Activated CD8-positive, alpha-beta memory T cell treated with anti-CD3 and anti-CD28 coated beads, Interleukin-2, amount 10 ng/mL, durations not matched to agents 7 days and 5 days (primary cell): ENCODE measurements at regions of chr1 and their contacts with region 1.

Region 1: GRCh38 chr1:101238681-101239094 is 1.9 kb downstream of the S1PR1 start:
- DNase-seq: peak; percentile 94
- ATAC-seq: peak; percentile 55
- H3K4me3 Mint-ChIP-seq: peak overlapping the region; percentile 88
- H3K27ac Mint-ChIP-seq: peak overlapping the region; percentile 95
- H3K4me1 Mint-ChIP-seq: peaks cover 59% of the 10 kb centered on the region
- H3K27me3 Mint-ChIP-seq: no peaks in the 10 kb centered on the region

Region 2: GRCh38 chr1:100622037-100622436 is 616.7 kb before region 1 on chr1:
- CTCF ChIA-PET with region 1: no interaction called
- DNase-seq: no peak
- ATAC-seq: no peak
- H3K4me3 Mint-ChIP-seq: no peak overlapping the region
- H3K27ac Mint-ChIP-seq: no peak overlapping the region
- H3K4me1 Mint-ChIP-seq: peaks cover under 1% of the 10 kb centered on the region
- H3K27me3 Mint-ChIP-seq: peaks cover 2% of the 10 kb centered on the region

Region 3: GRCh38 chr1:100921109-100921706 is 317.5 kb before region 1 on chr1:
- CTCF ChIA-PET with region 1: interaction called, 25 read pairs
- DNase-seq: no peak
- ATAC-seq: no peak
- H3K4me3 Mint-ChIP-seq: no peak overlapping the region
- H3K27ac Mint-ChIP-seq: no peak overlapping the region
- H3K4me1 Mint-ChIP-seq: peaks cover 19% of the 10 kb centered on the region
- H3K27me3 Mint-ChIP-seq: no peaks in the 10 kb centered on the region

Region 4: DNA sequence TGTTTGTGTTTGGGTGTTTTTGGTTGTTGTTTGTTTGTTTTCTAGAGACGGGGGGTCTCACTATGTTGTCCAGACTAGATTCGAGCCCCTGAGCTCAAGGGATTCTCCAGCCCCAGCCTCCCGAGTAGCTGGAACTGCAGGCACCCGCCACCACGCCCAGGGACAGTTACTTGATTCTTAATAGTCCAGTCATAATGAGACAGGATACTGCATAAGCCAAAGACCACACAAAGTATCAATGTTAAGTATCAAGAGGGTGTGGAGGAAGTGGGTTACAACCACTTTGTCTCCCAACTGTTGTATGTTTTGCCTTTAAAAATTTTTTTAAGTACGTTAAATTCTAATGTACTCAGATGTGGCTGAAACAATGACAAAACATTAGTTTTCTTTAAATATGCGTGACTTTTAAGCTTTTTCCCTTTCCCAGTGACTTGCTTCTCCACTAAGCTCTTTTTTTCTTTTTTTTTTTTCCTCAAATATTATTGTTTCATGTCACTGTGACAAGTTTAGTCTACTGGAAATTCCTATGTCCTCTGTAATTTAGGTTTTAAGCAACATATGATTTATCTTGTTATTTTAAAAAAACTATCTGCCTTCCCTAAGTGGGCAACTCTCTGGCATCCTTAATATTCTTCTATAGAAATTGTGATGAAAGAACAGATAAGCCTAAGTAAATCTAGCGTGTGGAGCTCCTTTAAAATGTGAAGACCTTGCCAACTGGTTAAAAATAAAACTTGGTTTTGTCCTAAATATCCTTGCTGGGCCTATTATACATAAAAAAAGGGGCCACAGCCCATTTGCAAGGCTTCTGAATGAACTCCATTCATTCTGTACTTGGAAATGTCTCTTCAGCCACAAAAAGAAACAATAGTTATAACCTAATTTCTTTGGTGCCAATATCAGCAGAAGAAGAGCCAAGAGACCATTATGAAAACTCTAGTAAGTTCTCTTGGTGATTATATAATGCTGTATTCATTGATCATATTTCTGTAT is 156.9 kb before region 1 on chr1:
- CTCF ChIA-PET with region 1: interaction called, 10 read pairs
- DNase-seq: peak; percentile 82
- ATAC-seq: peak; percentile 95
- H3K4me3 Mint-ChIP-seq: peak overlapping the region; percentile 13
- H3K27ac Mint-ChIP-seq: peak overlapping the region; percentile 97
- H3K4me1 Mint-ChIP-seq: peaks cover 39% of the 10 kb centered on the region
- H3K27me3 Mint-ChIP-seq: no peaks in the 10 kb centered on the region

Region 5: DNA sequence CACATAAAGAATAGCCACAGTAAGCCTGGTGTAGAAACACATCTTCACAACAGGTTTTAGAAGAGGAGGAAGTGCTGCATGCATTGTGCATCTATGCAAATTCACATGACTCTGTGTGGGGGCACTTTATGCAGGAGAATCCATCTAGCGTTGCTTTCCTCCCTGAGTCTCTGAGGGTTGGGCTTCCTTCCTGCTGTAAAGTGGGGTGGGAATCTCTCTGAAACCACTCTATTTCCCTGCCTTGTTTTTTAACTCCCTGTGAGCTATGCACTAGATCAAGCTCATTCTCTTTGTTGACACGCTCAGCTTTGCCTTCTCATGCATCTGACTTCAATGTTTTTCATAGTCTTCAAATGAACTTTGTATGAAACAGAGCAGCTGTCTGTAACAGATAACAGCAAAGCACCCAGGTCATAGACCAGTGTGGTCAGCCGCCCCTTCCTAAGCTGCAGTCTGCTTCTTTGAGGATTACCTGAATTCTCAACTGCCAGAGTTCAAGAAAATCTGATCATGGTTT is 110.4 kb before region 1 on chr1:
- CTCF ChIA-PET with region 1: interaction called, 17 read pairs
- DNase-seq: no peak
- ATAC-seq: peak; percentile 56
- H3K4me3 Mint-ChIP-seq: peak overlapping the region; percentile 12
- H3K27ac Mint-ChIP-seq: peak overlapping the region; percentile 78
- H3K4me1 Mint-ChIP-seq: peaks cover 49% of the 10 kb centered on the region
- H3K27me3 Mint-ChIP-seq: peaks cover 6% of the 10 kb centered on the region

Region 6: DNA sequence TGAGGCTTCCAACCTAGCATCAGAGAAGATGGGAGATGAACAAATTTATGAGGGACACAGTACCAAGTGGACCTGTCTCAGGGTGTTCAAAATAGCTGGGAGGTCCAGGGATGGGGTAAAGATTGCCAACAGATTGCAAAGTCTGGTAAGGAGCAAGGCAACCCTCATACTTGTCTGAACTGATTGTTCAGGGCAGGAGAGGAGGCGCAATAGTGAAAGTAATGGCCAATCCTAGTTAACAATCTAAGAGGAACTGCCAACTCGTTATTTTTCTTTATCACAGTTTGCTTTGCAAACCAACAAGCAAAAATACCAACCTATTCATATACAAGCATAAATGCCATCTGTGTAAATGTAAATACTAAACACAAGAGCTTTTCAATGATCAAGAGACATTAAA is 80.3 kb before region 1 on chr1:
- CTCF ChIA-PET with region 1: no interaction called
- DNase-seq: no peak
- ATAC-seq: no peak
- H3K4me3 Mint-ChIP-seq: no peak overlapping the region
- H3K27ac Mint-ChIP-seq: no peak overlapping the region
- H3K4me1 Mint-ChIP-seq: peaks cover 6% of the 10 kb centered on the region
- H3K27me3 Mint-ChIP-seq: no peaks in the 10 kb centered on the region

Region 7: GRCh38 chr1:101178688-101179491 is 59.8 kb before region 1 on chr1:
- CTCF ChIA-PET with region 1: interaction called, 26 read pairs
- DNase-seq: peak; percentile 64
- ATAC-seq: peak; percentile 80
- H3K4me3 Mint-ChIP-seq: peak overlapping the region; percentile 73
- H3K27ac Mint-ChIP-seq: peak overlapping the region; percentile 96
- H3K4me1 Mint-ChIP-seq: peaks cover 61% of the 10 kb centered on the region
- H3K27me3 Mint-ChIP-seq: no peaks in the 10 kb centered on the region

Region 8: DNA sequence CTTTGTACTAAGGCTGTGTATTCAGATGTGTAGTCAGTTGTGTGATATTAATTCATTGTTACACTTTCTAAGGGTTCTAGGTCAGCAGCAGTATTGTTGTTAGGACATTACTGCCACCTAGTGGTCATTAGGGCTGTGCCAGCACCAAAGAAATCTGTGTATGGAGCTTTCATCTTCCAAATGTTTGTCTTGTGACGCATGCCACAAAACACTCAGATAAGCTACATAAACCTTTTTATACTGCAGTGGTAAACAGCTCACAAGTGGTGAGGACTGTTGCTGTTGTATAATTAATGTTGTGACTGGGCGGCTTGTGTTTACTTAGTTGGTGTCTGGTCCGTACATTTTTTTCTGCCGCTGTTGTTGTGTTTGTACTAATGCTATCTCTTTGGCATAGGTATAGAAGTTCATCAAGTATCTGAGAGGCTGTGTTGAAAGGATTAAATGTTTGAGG is 49.8 kb after region 1 on chr1:
- CTCF ChIA-PET with region 1: interaction called, 54 read pairs
- DNase-seq: peak; percentile 76
- ATAC-seq: peak; percentile 60
- H3K4me3 Mint-ChIP-seq: no peak overlapping the region
- H3K27ac Mint-ChIP-seq: no peak overlapping the region
- H3K4me1 Mint-ChIP-seq: peaks cover 64% of the 10 kb centered on the region
- H3K27me3 Mint-ChIP-seq: no peaks in the 10 kb centered on the region